ENCODE measurements at regions of chr19 and their contacts with region 1.

Region 1: GRCh38 chr19:14405758-14406644 is 13.1 kb downstream of the DDX39A start:
- DNase-seq: peak; percentile 85 to 96 (median 91)
- ATAC-seq: peak; percentile 76
- H3K4me3 ChIP-seq: no peak overlapping the region
- H3K4me3 Mint-ChIP-seq: peak overlapping the region in 1 of 10 donors; percentile 12
- H3K27ac ChIP-seq: peak overlapping the region; percentile 54
- H3K27ac Mint-ChIP-seq: peak overlapping the region; percentile 58 to 85 (median 60)
- H3K4me1 ChIP-seq: peaks cover 8 to 25% of the 10 kb centered on the region in 2 donors
- H3K4me1 Mint-ChIP-seq: peaks cover 6 to 26% (median 20%) of the 10 kb centered on the region in 7 donors
- H3K27me3 ChIP-seq: no peaks in the 10 kb centered on the region
- H3K27me3 Mint-ChIP-seq: no peaks in the 10 kb centered on the region

Region 2: DNA sequence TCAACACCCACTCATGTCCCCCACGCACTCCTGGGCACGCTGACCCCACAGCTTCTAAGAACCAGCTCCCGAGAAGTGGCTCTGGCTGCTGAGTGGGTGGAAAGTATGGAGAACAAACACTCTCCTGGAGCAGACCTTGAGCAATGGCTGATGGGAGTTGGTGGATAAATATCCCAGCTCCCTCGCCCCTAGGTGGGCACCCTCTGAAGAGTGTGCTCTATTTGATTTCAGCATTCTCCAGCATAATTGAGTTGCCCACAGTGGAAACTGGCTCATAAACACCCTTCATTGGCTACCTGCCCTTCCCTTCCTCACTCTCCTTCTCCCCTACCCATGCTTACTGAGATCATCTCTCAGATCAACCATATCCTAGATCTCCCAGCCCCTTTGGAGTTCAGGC is 66.3 kb before region 1 on chr19:
- CTCF ChIA-PET with region 1: no interaction called
- POLR2A ChIA-PET with region 1: no interaction called
- intact Hi-C with region 1: no loop called
- DNase-seq: no peak
- ATAC-seq: no peak
- H3K4me3 ChIP-seq: no peak overlapping the region
- H3K4me3 Mint-ChIP-seq: no peak overlapping the region
- H3K27ac ChIP-seq: no peak overlapping the region
- H3K27ac Mint-ChIP-seq: no peak overlapping the region
- H3K4me1 ChIP-seq: no peaks in the 10 kb centered on the region
- H3K4me1 Mint-ChIP-seq: peaks cover under 1 to 2% (median 2%) of the 10 kb centered on the region in 7 donors
- H3K27me3 ChIP-seq: no peaks in the 10 kb centered on the region
- H3K27me3 Mint-ChIP-seq: no peaks in the 10 kb centered on the region

Region 3: DNA sequence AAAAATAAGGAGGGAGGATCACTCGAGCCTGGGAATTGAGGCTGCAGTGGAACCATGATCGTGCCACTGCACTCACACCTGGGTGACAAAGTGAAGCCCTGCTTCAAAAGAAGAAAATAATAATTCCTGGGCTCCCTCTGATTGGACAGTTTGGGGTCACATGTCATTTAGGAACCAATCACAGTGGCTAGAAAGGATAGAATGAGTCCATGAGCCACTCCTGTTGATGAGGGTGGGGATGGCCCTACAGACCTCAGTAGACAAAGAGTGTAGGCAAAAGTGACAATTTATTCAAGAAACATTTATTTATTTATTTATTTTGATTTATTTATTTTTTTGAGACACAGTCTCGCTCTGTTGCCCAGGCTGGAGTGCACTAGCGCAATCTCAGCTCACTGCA is 51.6 kb before region 1 on chr19:
- CTCF ChIA-PET with region 1: interaction called, 81 read pairs
- POLR2A ChIA-PET with region 1: interaction called, 11 read pairs
- intact Hi-C with region 1: no loop called
- DNase-seq: no peak
- ATAC-seq: no peak
- H3K4me3 ChIP-seq: no peak overlapping the region
- H3K4me3 Mint-ChIP-seq: peak overlapping the region in 1 of 10 donors; percentile 13
- H3K27ac ChIP-seq: peak overlapping the region; percentile 7
- H3K27ac Mint-ChIP-seq: peak overlapping the region in 5 of 9 donors; percentile 25 to 99 (median 95)
- H3K4me1 ChIP-seq: peaks cover 13 to 32% of the 10 kb centered on the region in 2 donors
- H3K4me1 Mint-ChIP-seq: peaks cover 27 to 51% (median 40%) of the 10 kb centered on the region in 7 donors
- H3K27me3 ChIP-seq: no peaks in the 10 kb centered on the region
- H3K27me3 Mint-ChIP-seq: no peaks in the 10 kb centered on the region

Region 4: GRCh38 chr19:14383661-14384555 is 22.1 kb before region 1 on chr19:
- CTCF ChIA-PET with region 1: interaction called, 9 read pairs
- POLR2A ChIA-PET with region 1: interaction called, 18 read pairs
- intact Hi-C with region 1: loop called in 1 of 2 experiments (anchors 1 kb)
- DNase-seq: peak in 2 of 9 donors; percentile 69 to 81
- ATAC-seq: peak; percentile 4
- H3K4me3 ChIP-seq: peak overlapping the region; percentile 95
- H3K4me3 Mint-ChIP-seq: peak overlapping the region; percentile 89 to 100 (median 94)
- H3K27ac ChIP-seq: peak overlapping the region; percentile 98
- H3K27ac Mint-ChIP-seq: peak overlapping the region; percentile 96 to 99 (median 97)
- H3K4me1 ChIP-seq: peaks cover 24 to 28% of the 10 kb centered on the region in 2 donors
- H3K4me1 Mint-ChIP-seq: peaks cover 36 to 51% (median 47%) of the 10 kb centered on the region in 7 donors
- H3K27me3 ChIP-seq: no peaks in the 10 kb centered on the region
- H3K27me3 Mint-ChIP-seq: peaks cover 0 to 3% (median 0%) of the 10 kb centered on the region in 5 donors

Measured in naive thymus-derived CD4-positive, alpha-beta T cell (primary cell).